IMR-90 (cell line): ENCODE measurements at regions of chr3 and their contacts with region 1.

Region 1: DNA sequence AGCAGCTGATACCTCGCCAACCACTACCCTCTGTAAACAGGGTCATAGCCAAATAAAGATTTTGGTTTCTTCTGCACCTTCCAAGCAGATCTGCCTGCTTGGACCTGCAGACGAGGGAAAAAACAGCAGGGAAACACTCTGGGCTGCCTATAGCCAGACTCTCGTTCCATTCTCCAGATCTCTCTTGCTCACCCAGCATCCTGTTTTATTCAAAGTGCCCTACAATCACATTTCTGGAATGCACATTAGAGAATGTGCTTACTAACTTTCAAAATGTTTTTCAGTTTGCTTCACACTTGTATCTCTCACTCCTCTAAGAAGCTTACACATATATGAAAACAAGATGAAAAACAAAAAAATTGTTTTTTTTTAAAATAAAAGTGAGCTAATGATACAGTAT is 71.4 kb downstream of the MLH1 start:
- DNase-seq: peak; percentile 41
- ATAC-seq: peak; percentile 88
- H3K4me3 ChIP-seq: no peak overlapping the region
- H3K27ac ChIP-seq: no peak overlapping the region
- H3K4me1 ChIP-seq: peaks cover 5% of the 10 kb centered on the region; the same call in 1 of the 2 replicates
- H3K27me3 ChIP-seq: no peaks in the 10 kb centered on the region
- CTCF ChIP-seq: no peak
- POLR2A ChIP-seq: no peak
- RAD21 ChIP-seq: no peak

Region 2: GRCh38 chr3:36944012-36944640 is 120.6 kb before region 1 on chr3:
- CTCF ChIA-PET with region 1: no interaction called
- POLR2A ChIA-PET with region 1: no interaction called
- dilution Hi-C with region 1: no loop called
- in situ Hi-C with region 1: no loop called
- intact Hi-C with region 1: no loop called
- DNase-seq: peak; percentile 59
- ATAC-seq: peak; percentile 78
- H3K4me3 ChIP-seq: peak overlapping the region; percentile 41
- H3K27ac ChIP-seq: peak overlapping the region; percentile 73
- H3K4me1 ChIP-seq: peaks cover 8% of the 10 kb centered on the region
- H3K27me3 ChIP-seq: no peaks in the 10 kb centered on the region
- CTCF ChIP-seq: peak; percentile 13; the same call in 1 of the 2 replicates
- POLR2A ChIP-seq: no peak
- RAD21 ChIP-seq: no peak

Region 3: DNA sequence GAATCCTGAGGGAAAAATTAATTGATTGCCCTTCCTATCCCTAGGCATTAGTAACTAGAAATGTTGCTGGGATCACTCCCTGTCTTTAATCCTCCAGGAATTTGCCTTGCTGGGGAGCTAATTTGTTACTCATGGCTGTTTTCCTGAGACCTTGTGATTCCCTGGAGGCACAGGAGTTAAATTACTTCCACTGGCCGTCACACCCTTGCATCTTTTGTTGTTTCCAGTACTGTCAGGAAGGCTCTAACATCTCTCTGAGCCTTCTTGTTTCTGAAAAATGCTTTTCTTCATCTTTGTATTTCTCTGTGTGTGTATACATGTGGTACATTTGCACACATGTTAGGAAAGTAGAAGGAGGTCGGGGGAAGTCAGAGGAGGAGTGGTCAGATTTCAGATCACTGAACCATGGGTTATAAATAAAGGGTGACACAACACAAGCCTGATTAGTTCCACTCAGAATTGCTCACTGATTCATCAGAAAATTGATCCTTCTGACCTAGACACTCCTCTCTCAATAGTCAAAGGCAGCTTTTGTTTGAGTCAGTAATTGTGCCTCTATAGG is 133.1 kb after region 1 on chr3:
- CTCF ChIA-PET with region 1: no interaction called
- POLR2A ChIA-PET with region 1: interaction called, 10 read pairs
- dilution Hi-C with region 1: no loop called
- in situ Hi-C with region 1: no loop called
- intact Hi-C with region 1: no loop called
- DNase-seq: peak; percentile 55
- ATAC-seq: peak; percentile 66
- H3K4me3 ChIP-seq: no peak overlapping the region
- H3K27ac ChIP-seq: no peak overlapping the region
- H3K4me1 ChIP-seq: peaks cover 7% of the 10 kb centered on the region; the same call in 1 of the 2 replicates
- H3K27me3 ChIP-seq: no peaks in the 10 kb centered on the region
- CTCF ChIP-seq: no peak
- POLR2A ChIP-seq: no peak
- RAD21 ChIP-seq: no peak